Activated B cell treated with CpG ODN at 0.5 μM for 24 hours (primary cell): ENCODE measurements at regions of chr18 and their contacts with region 1.

Region 1: GRCh38 chr18:46073474-46074331 is 1.6 kb upstream of the PSTPIP2 start:
- DNase-seq: no peak
- ATAC-seq: peak; percentile 53
- H3K4me3 Mint-ChIP-seq: no peak overlapping the region
- H3K27ac Mint-ChIP-seq: no peak overlapping the region
- H3K4me1 Mint-ChIP-seq: peaks cover 17% of the 10 kb centered on the region
- H3K27me3 Mint-ChIP-seq: peaks cover 10% of the 10 kb centered on the region
- CTCF ChIP-seq: no peak

Region 2: GRCh38 chr18:45621061-45621511 is 452.6 kb before region 1 on chr18:
- CTCF ChIA-PET with region 1: interaction called, 3 read pairs
- POLR2A ChIA-PET with region 1: no interaction called
- intact Hi-C with region 1: loop called (anchors 1 kb)
- DNase-seq: no peak
- ATAC-seq: peak; percentile 64
- H3K4me3 Mint-ChIP-seq: no peak overlapping the region
- H3K27ac Mint-ChIP-seq: no peak overlapping the region
- H3K4me1 Mint-ChIP-seq: no peaks in the 10 kb centered on the region
- H3K27me3 Mint-ChIP-seq: peaks cover 13% of the 10 kb centered on the region
- CTCF ChIP-seq: peak; percentile 96

Region 3: GRCh38 chr18:45910405-45911023 is 163.2 kb before region 1 on chr18:
- CTCF ChIA-PET with region 1: interaction called, 3 read pairs
- POLR2A ChIA-PET with region 1: no interaction called
- intact Hi-C with region 1: loop called (anchors 1 kb)
- DNase-seq: peak; percentile 23
- ATAC-seq: peak; percentile 72
- H3K4me3 Mint-ChIP-seq: no peak overlapping the region
- H3K27ac Mint-ChIP-seq: no peak overlapping the region
- H3K4me1 Mint-ChIP-seq: no peaks in the 10 kb centered on the region
- H3K27me3 Mint-ChIP-seq: no peaks in the 10 kb centered on the region
- CTCF ChIP-seq: peak; percentile 42

Region 4: GRCh38 chr18:45920367-45920766 is 153.3 kb before region 1 on chr18:
- CTCF ChIA-PET with region 1: interaction called, 8 read pairs
- POLR2A ChIA-PET with region 1: no interaction called
- intact Hi-C with region 1: loop called (anchors 2 kb)
- DNase-seq: no peak
- ATAC-seq: peak; percentile 54
- H3K4me3 Mint-ChIP-seq: no peak overlapping the region
- H3K27ac Mint-ChIP-seq: no peak overlapping the region
- H3K4me1 Mint-ChIP-seq: peaks cover 19% of the 10 kb centered on the region
- H3K27me3 Mint-ChIP-seq: no peaks in the 10 kb centered on the region
- CTCF ChIP-seq: no peak

Region 5: GRCh38 chr18:45926691-45927090 is 147.0 kb before region 1 on chr18:
- CTCF ChIA-PET with region 1: interaction called, 8 read pairs
- POLR2A ChIA-PET with region 1: no interaction called
- intact Hi-C with region 1: loop called (anchors 1 kb)
- DNase-seq: no peak
- ATAC-seq: no peak
- H3K4me3 Mint-ChIP-seq: no peak overlapping the region
- H3K27ac Mint-ChIP-seq: no peak overlapping the region
- H3K4me1 Mint-ChIP-seq: no peaks in the 10 kb centered on the region
- H3K27me3 Mint-ChIP-seq: no peaks in the 10 kb centered on the region
- CTCF ChIP-seq: no peak

Region 6: DNA sequence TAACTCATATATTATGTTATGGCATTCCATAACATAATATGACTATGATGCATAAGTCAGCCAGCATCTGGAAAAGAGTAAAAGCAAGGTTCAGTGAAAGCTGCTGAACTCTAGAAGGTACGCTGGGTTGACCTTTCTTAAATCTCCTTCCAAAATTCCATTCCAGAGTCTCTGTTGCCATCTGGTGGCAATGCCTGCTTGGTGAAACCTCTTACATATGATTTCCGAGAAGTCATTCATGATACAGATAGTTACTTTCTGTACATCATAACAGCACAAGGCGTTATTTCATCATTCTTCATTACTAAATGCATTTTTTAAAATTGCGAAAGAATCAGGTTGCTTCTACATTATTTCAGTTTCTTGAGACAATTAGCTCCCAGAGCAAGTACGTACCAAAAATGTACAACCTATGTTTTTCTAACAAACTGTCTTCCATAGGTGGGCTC is 99.6 kb before region 1 on chr18:
- CTCF ChIA-PET with region 1: interaction called, 6 read pairs
- POLR2A ChIA-PET with region 1: no interaction called
- intact Hi-C with region 1: loop called (anchors 2 kb)
- DNase-seq: no peak
- ATAC-seq: peak; percentile 54
- H3K4me3 Mint-ChIP-seq: no peak overlapping the region
- H3K27ac Mint-ChIP-seq: no peak overlapping the region
- H3K4me1 Mint-ChIP-seq: peaks cover 4% of the 10 kb centered on the region
- H3K27me3 Mint-ChIP-seq: no peaks in the 10 kb centered on the region
- CTCF ChIP-seq: no peak

Region 7: DNA sequence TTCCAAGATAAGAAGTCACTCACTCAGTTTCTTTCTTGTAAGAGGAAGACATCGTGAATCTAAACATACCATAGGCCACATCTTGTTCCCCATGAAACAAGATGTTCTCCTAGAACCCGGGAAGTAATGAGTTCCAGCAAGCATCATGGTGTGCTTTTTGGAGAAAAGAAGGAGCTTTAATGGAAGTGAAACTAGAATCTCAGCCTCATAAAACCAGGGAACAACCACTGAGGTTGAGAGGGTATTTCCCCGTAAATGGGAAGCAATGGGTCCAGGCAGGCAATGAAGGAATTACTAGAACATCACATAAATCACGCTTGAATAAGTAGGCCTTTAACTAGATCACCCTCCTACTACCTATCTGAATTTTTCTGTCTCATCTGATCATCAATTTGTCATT is 42.0 kb before region 1 on chr18:
- CTCF ChIA-PET with region 1: no interaction called
- POLR2A ChIA-PET with region 1: no interaction called
- intact Hi-C with region 1: loop called (anchors 2 kb)
- DNase-seq: no peak
- ATAC-seq: no peak
- H3K4me3 Mint-ChIP-seq: no peak overlapping the region
- H3K27ac Mint-ChIP-seq: no peak overlapping the region
- H3K4me1 Mint-ChIP-seq: peaks cover 12% of the 10 kb centered on the region
- H3K27me3 Mint-ChIP-seq: peaks cover 6% of the 10 kb centered on the region
- CTCF ChIP-seq: no peak